GM12878 (cell line): ENCODE measurements at regions of chr18 and their contacts with region 1.

Region 1: GRCh38 chr18:33022370-33022769 is 249.5 kb upstream of the KLHL14 start:
- DNase-seq: no peak
- ATAC-seq: peak; percentile 49; the same call in 1 of the 3 replicates
- H3K4me3 ChIP-seq: no peak overlapping the region
- H3K27ac ChIP-seq: no peak overlapping the region
- H3K4me1 ChIP-seq: no peaks in the 10 kb centered on the region
- H3K27me3 ChIP-seq: no peaks in the 10 kb centered on the region
- CTCF ChIP-seq: no peak
- EP300 ChIP-seq: no peak
- POLR2A ChIP-seq: no peak
- RAD21 ChIP-seq: no peak

Region 2: DNA sequence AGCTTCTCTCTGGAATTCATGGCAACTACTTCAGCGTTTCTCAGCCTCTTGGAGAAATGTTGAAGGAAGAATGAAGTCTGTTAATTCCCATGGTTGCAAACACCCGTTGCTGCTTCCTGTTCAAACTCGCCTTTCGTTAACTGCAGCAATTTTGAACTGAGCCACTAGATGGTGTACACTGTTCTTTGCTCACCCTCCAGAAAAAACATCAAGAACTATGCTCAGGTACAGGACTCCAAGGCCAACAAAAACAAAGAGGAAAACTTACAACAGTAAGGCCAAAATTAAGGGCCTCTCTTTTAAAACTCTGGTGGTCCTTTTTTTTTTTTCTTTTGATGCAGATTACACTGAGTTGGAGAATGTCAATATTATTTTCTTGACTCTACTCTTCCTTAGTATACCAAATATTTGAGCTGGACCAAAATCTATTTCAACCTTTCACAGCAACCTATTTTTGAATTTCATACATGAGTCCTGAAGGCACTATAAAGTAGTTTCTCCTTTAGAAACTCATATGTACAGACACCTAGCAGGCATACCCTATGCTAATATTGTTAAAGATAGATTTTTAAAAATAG is 307.7 kb before region 1 on chr18:
- CTCF ChIA-PET with region 1: no interaction called
- POLR2A ChIA-PET with region 1: no interaction called
- RAD21 ChIA-PET with region 1: no interaction called
- SMC1A ChIA-PET with region 1: no interaction called
- in situ Hi-C with region 1: no loop called
- intact Hi-C with region 1: loop called (anchors 10 kb)
- DNase-seq: peak; percentile 12
- ATAC-seq: peak; percentile 91
- H3K4me3 ChIP-seq: no peak overlapping the region
- H3K27ac ChIP-seq: no peak overlapping the region
- H3K4me1 ChIP-seq: no peaks in the 10 kb centered on the region
- H3K27me3 ChIP-seq: no peaks in the 10 kb centered on the region
- CTCF ChIP-seq: peak; percentile 86 to 88 (median 87)
- EP300 ChIP-seq: no peak
- POLR2A ChIP-seq: no peak
- RAD21 ChIP-seq: peak; percentile 92

Region 3: DNA sequence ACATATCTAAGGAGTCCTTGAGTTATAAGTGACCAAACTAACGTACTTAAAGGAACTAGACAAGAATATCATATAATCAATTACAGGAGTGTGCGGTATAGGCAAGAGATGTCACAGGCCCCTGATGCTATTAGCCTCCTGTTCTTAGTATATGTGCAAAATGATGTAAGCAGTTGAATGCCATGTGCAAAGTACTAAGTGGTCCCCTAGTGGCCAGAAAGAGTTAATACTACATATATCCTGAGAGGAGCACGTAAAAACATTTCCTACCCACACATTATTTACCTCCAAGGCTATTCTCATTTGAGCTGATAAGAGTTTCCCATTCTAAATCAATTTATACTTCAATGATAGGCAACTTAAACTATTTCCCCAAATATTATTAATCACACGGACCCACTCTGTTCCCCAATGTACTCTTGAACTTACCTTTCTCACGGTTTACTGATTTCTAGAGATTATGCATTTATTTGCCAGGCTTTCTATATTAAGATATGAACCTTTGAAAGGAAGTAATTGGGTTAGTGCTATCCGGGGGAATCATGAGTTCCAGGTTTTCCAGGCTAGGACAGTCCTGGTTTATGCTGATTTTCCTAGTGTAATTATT is 91.6 kb before region 1 on chr18:
- CTCF ChIA-PET with region 1: no interaction called
- POLR2A ChIA-PET with region 1: no interaction called
- RAD21 ChIA-PET with region 1: no interaction called
- SMC1A ChIA-PET with region 1: no interaction called
- in situ Hi-C with region 1: no loop called
- intact Hi-C with region 1: no loop called
- DNase-seq: no peak
- ATAC-seq: peak; percentile 97
- H3K4me3 ChIP-seq: no peak overlapping the region
- H3K27ac ChIP-seq: no peak overlapping the region
- H3K4me1 ChIP-seq: no peaks in the 10 kb centered on the region
- H3K27me3 ChIP-seq: no peaks in the 10 kb centered on the region
- CTCF ChIP-seq: peak; percentile 55 to 74 (median 70); a peak in 5 of 6 replicates
- EP300 ChIP-seq: no peak
- POLR2A ChIP-seq: no peak
- RAD21 ChIP-seq: peak; percentile 71